SK-N-SH (cell line): ENCODE measurements at regions of chr10 and their contacts with region 1.

Region 1: DNA sequence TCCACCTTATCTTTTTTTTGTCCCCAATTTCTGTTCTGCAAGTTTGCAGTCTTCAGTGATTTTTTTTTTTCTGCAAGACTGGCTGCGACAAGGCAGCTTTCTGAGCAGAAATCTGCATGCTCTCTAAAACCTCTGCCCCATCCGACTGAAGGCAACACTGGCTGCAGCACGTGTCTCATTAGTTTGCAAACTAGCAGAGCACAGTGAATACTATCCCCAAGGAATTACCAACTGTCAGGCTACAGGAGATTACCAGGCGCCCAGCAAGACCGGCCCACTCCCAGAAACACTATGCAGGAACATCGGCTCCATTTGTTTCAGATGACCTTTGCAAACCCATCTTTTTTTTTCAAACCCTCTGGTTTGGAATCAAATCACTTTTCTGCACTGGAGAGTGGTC is 538.8 kb downstream of the SORCS1 start:
- DNase-seq: no peak
- H3K4me3 ChIP-seq: no peak overlapping the region
- H3K27ac ChIP-seq: peak overlapping the region in 1 of 2 experiments; percentile 59; a peak in 2 of 4 replicates
- H3K4me1 ChIP-seq: peaks cover 0 to 14% of the 10 kb centered on the region in 2 experiments; a peak in 2 of 4 replicates
- H3K27me3 ChIP-seq: no peaks in the 10 kb centered on the region
- CTCF ChIP-seq: no peak
- EP300 ChIP-seq: no peak
- RAD21 ChIP-seq: no peak

Region 2: GRCh38 chr10:106609470-106610266 is 16.1 kb before region 1 on chr10:
- CTCF ChIA-PET with region 1: interaction called, 14 read pairs
- POLR2A ChIA-PET with region 1: no interaction called
- DNase-seq: peak; percentile 8
- H3K4me3 ChIP-seq: no peak overlapping the region
- H3K27ac ChIP-seq: no peak overlapping the region
- H3K4me1 ChIP-seq: no peaks in the 10 kb centered on the region
- H3K27me3 ChIP-seq: no peaks in the 10 kb centered on the region
- CTCF ChIP-seq: peak; percentile 27
- EP300 ChIP-seq: no peak
- RAD21 ChIP-seq: no peak

Region 3: GRCh38 chr10:106615081-106615480 is 10.7 kb before region 1 on chr10:
- CTCF ChIA-PET with region 1: interaction called, 14 read pairs
- POLR2A ChIA-PET with region 1: no interaction called
- DNase-seq: no peak
- H3K4me3 ChIP-seq: no peak overlapping the region
- H3K27ac ChIP-seq: no peak overlapping the region
- H3K4me1 ChIP-seq: peaks cover 0 to 8% of the 10 kb centered on the region in 2 experiments; a peak in 2 of 4 replicates
- H3K27me3 ChIP-seq: no peaks in the 10 kb centered on the region
- CTCF ChIP-seq: no peak
- EP300 ChIP-seq: no peak
- RAD21 ChIP-seq: no peak